ENCODE measurements at regions of chr14 and their contacts with region 1.

Region 1: DNA sequence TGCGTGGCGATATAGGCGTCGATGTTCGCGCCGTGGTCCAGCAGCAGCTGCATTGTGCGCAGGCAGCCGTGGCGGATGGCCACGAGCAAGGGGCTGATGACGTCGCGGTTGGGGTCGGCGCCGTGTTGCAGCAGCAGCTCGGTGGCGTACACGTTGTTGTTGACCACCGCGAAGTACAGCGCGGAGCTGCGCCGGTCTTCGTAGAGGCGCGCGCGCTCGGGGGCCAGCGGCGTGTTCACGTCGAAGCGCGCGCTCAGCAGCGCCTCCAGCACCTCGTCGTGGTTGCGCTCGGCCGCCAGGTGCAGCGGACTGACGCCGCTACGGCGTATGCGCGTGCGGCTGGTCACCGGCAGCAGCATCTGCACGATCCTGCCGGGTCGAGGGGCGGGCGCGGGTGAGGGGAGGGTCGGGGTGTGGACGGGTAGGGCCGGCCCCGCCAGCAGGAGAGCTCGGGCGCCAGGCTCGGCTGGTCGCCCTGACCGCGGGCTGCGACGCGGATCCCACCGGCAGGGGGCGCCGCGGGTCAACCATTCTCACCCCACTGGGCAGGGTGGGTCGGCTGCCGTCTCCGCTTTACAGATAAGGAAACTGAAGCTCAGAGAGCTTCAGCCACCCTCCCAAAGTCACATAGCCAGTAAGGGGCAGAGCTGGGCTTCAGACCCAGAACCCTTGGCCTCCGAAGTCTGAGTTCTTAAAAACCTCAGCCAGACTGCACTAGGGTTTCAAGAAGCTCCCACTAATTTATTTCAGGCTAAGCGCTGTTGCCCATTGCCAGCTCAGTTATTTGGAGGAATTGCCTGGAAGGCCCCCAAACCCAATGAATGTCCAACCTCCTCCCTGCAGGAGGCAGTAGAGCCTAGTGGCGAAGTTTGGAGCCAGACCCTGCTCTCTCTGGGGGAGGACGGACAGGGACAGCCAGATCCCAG is 12.4 kb downstream of the FAM181A start:
- DNase-seq: peak; percentile 78 to 99
- H3K4me3 ChIP-seq: peak overlapping the region; percentile 36 to 53 (median 40)
- H3K27ac ChIP-seq: no peak overlapping the region
- H3K4me1 ChIP-seq: peaks cover 0 to 14% (median 8%) of the 10 kb centered on the region in 4 experiments; a peak in 4 of 7 replicates
- H3K27me3 ChIP-seq: peaks cover 7 to 25% (median 17%) of the 10 kb centered on the region in 4 experiments
- CTCF ChIP-seq: peak; percentile 74 to 98 (median 83)
- EP300 ChIP-seq: 0 out of 3 replicates have a peak, but pooled peaks of 1 of the 2 experiments have one; percentile 48
- POLR2A ChIP-seq: no peak
- RAD21 ChIP-seq: peak; percentile 73 to 82

Region 2: GRCh38 chr14:93759719-93760307 is 179.8 kb before region 1 on chr14:
- CTCF ChIA-PET with region 1: no interaction called
- POLR2A ChIA-PET with region 1: no interaction called
- DNase-seq: no peak
- H3K4me3 ChIP-seq: no peak overlapping the region
- H3K27ac ChIP-seq: no peak overlapping the region
- H3K4me1 ChIP-seq: no peaks in the 10 kb centered on the region; a peak in 1 of 7 replicates
- H3K27me3 ChIP-seq: no peaks in the 10 kb centered on the region
- CTCF ChIP-seq: no peak
- EP300 ChIP-seq: no peak
- POLR2A ChIP-seq: no peak
- RAD21 ChIP-seq: no peak

Region 3: GRCh38 chr14:93906341-93907329 is 32.9 kb before region 1 on chr14:
- CTCF ChIA-PET with region 1: interaction called, 51 read pairs
- POLR2A ChIA-PET with region 1: no interaction called
- DNase-seq: peak; percentile 47 to 87
- H3K4me3 ChIP-seq: no peak overlapping the region
- H3K27ac ChIP-seq: no peak overlapping the region
- H3K4me1 ChIP-seq: peaks cover 0 to 7% (median 3%) of the 10 kb centered on the region in 4 experiments; a peak in 4 of 7 replicates
- H3K27me3 ChIP-seq: no peaks in the 10 kb centered on the region; a peak in 1 of 7 replicates
- CTCF ChIP-seq: peak; percentile 75 to 93 (median 91)
- EP300 ChIP-seq: no peak
- POLR2A ChIP-seq: no peak
- RAD21 ChIP-seq: peak; percentile 90

Region 4: DNA sequence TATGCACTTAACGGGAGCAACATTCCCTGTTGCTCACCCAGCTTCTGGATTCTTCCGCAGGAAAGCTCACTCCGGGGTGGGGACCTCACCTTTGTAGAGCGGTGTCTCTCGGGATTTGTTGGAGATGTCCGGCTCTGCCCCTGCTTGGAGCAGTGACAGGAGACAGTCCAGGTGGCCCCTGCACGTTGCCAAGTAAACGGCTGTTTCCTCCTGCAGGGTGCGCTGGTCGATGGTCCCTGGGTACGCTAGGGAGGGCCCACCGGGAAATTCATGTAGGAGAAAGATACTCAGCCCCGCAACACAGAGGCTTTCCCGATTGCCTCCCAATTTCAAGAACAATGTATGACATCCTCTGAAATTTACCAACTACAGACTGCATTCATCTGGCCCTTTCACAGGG is 13.7 kb after region 1 on chr14:
- CTCF ChIA-PET with region 1: interaction called, 32 read pairs
- POLR2A ChIA-PET with region 1: interaction called, 3 read pairs
- DNase-seq: peak in 1 of 2 experiments; percentile 65
- H3K4me3 ChIP-seq: no peak overlapping the region
- H3K27ac ChIP-seq: no peak overlapping the region
- H3K4me1 ChIP-seq: peaks cover 0 to 12% (median 4%) of the 10 kb centered on the region in 4 experiments; a peak in 3 of 7 replicates
- H3K27me3 ChIP-seq: no peaks in the 10 kb centered on the region
- CTCF ChIP-seq: peak; percentile 44 to 59 (median 55)
- EP300 ChIP-seq: no peak
- POLR2A ChIP-seq: no peak
- RAD21 ChIP-seq: peak; percentile 38 to 54

Region 5: DNA sequence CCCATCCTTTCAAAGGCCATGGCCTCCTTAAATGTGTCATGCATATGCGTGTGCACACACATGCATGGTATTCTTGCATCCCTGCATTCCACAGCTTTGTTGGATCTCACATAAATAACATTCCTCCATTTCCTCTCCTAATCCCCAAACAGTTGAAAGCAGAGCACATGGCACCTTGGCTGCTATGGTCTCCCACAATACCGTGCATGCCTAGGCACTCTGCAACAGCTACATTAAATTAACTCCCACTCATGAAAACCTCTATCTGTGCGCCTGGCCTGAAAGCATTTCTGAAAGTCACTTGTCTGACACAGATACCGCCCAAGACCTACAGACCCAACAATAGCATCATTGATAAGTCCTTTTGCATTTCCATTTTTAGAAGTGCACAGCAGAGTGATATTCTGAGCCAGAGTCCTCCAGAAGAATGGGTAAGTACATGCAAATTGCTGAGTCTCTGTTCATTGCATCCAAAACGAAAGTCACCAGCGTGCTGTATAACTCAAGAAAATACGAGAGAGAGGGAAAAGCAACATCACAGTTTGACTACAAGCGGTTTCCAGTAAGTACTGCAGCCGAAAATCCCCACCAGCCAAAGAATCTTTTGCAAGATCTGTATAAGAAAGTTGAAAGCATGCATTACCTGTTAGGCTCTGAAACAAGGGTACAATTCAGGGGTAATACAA is 36.4 kb after region 1 on chr14:
- CTCF ChIA-PET with region 1: interaction called, 77 read pairs
- POLR2A ChIA-PET with region 1: interaction called, 4 read pairs
- DNase-seq: no peak
- H3K4me3 ChIP-seq: no peak overlapping the region
- H3K27ac ChIP-seq: no peak overlapping the region; the same call in 1 of the 2 replicates
- H3K4me1 ChIP-seq: peaks cover 0 to 3% (median 0%) of the 10 kb centered on the region in 4 experiments; a peak in 1 of 7 replicates
- H3K27me3 ChIP-seq: no peaks in the 10 kb centered on the region; a peak in 1 of 7 replicates
- CTCF ChIP-seq: no peak
- EP300 ChIP-seq: no peak
- POLR2A ChIP-seq: no peak
- RAD21 ChIP-seq: no peak

Region 6: GRCh38 chr14:94021001-94021400 is 81.4 kb after region 1 on chr14:
- CTCF ChIA-PET with region 1: interaction called, 17 read pairs
- POLR2A ChIA-PET with region 1: interaction called, 3 read pairs
- DNase-seq: no peak
- H3K4me3 ChIP-seq: no peak overlapping the region
- H3K27ac ChIP-seq: no peak overlapping the region
- H3K4me1 ChIP-seq: peaks cover 0 to 18% (median 10%) of the 10 kb centered on the region in 4 experiments; a peak in 4 of 7 replicates
- H3K27me3 ChIP-seq: no peaks in the 10 kb centered on the region; a peak in 1 of 7 replicates
- CTCF ChIP-seq: no peak
- EP300 ChIP-seq: no peak
- POLR2A ChIP-seq: no peak
- RAD21 ChIP-seq: no peak

Region 7: GRCh38 chr14:94136575-94137331 is 197.2 kb after region 1 on chr14:
- CTCF ChIA-PET with region 1: interaction called, 18 read pairs
- POLR2A ChIA-PET with region 1: no interaction called
- DNase-seq: peak; percentile 75 to 97
- H3K4me3 ChIP-seq: no peak overlapping the region
- H3K27ac ChIP-seq: no peak overlapping the region
- H3K4me1 ChIP-seq: peaks cover 5 to 17% (median 8%) of the 10 kb centered on the region in 4 experiments; a peak in 6 of 7 replicates
- H3K27me3 ChIP-seq: no peaks in the 10 kb centered on the region
- CTCF ChIP-seq: peak; percentile 94 to 99 (median 98)
- EP300 ChIP-seq: no peak
- POLR2A ChIP-seq: no peak
- RAD21 ChIP-seq: peak; percentile 91 to 95